K562 (cell line): ENCODE measurements at regions of chr6 and their contacts with region 1.

Region 1: DNA sequence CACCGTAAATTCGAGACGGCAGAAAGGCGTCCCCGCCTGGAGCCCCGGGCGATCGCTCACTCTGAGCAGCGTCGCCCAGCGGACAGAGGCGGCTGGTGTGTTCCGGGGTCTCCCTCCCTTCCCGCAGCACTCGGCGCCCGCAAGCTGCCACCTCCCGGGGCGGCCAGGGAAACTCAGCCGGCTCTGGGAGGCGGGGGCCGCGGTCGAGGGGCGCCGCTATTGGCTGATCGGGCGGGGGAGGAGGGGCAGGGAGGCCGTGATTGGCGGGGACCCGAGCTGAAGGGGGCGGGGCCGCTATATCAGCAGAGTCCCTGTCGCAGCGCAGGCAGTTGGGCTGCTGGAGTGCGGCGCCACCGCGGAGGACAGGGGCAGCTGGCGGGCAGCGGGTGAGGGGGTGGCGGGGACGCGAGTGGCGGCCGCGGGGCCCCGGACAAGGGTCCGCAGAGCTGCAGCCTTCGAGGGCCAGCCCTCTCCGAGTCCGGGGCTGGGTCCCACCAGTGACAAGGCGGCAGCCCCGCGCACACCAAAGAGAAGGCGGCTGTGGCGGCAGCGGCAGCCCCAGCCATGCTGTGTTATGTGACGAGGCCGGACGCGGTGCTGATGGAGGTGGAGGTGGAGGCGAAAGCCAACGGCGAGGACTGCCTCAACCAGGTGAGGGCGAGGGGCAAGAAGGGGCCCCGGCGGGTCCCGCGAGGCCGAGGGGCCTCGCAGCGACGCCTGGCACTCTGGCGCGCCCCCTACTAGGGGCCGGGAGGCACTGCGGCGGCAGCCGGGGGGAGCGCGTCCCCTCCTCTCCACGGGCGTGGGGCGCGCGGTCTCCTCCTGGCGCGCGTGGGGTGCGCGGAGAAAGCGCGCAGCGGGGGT is at the start of gene MYLIP:
- DNase-seq: peak; percentile 99 to 100 (median 100)
- ATAC-seq: peak; percentile 92
- H3K4me3 ChIP-seq: peak within 1 kb of the TSS; percentile 90
- H3K27ac ChIP-seq: peak within 1 kb of the TSS; percentile 92
- H3K4me1 ChIP-seq: peaks cover 20 to 21% of the 10 kb centered on the region in 2 experiments
- H3K27me3 ChIP-seq: no peaks in the 10 kb centered on the region
- CTCF ChIP-seq: peak; percentile 94 to 99 (median 99)
- EP300 ChIP-seq: peak; percentile 50
- POLR2A ChIP-seq: peak; percentile 99
- RAD21 ChIP-seq: peak; percentile 99 to 100
- polyA plus RNA-seq, gene MYLIP: 10.8 to 12.9 TPM

Region 2: DNA sequence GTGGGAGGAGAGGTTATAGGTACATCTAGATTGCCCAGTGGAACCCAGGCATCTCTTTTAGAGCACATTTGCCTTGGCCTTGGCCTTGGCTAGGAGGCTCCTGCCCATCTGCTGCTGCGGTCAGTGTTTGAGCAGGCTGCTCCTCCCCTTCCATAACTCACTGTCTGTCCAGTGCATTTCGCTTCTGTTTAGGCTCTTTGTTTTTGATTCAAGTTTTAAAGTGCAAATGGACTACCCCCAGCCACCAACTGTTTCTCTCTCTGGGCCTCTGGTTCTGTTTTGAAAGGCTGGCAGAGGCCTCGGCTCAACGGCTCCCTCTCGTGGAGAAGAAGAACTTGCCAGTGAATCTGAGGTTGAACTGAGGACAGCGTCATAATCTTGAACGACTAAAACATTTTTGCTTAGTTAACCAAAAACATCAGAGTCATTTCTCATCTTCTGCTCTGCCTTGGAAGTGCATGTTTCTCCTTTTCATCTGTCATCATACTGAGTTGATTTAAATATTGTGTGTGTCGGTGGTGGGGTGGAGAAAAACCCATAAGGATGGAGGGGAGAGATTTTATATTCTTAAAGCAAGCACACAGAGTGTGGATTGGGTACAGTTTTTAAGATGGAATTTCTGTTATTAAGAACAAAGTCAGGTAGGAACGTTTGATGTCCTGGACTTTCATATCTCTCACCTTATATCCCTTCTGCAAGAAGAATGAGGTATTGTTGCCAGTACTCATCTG is 637.6 kb before region 1 on chr6:
- CTCF ChIA-PET with region 1: no interaction called
- POLR2A ChIA-PET with region 1: no interaction called
- in situ Hi-C with region 1: no loop called
- intact Hi-C with region 1: no loop called
- DNase-seq: peak; percentile 66 to 78 (median 71)
- ATAC-seq: peak; percentile 93
- H3K4me3 ChIP-seq: no peak overlapping the region
- H3K27ac ChIP-seq: no peak overlapping the region
- H3K4me1 ChIP-seq: peaks cover 2 to 5% of the 10 kb centered on the region in 2 experiments; a peak in 3 of 5 replicates
- H3K27me3 ChIP-seq: no peaks in the 10 kb centered on the region
- CTCF ChIP-seq: peak; percentile 85 to 91 (median 88)
- EP300 ChIP-seq: 0 out of 2 replicates have a peak, but pooled peaks have one; percentile 11
- POLR2A ChIP-seq: no peak
- RAD21 ChIP-seq: peak; percentile 81 to 91

Region 3: GRCh38 chr6:15577550-15578171 is 551.3 kb before region 1 on chr6:
- CTCF ChIA-PET with region 1: no interaction called
- POLR2A ChIA-PET with region 1: no interaction called
- in situ Hi-C with region 1: no loop called
- intact Hi-C with region 1: no loop called
- DNase-seq: no peak
- ATAC-seq: no peak
- H3K4me3 ChIP-seq: no peak overlapping the region
- H3K27ac ChIP-seq: no peak overlapping the region
- H3K4me1 ChIP-seq: peaks cover 3 to 27% of the 10 kb centered on the region in 2 experiments; a peak in 4 of 5 replicates
- H3K27me3 ChIP-seq: no peaks in the 10 kb centered on the region
- CTCF ChIP-seq: no peak
- EP300 ChIP-seq: no peak
- POLR2A ChIP-seq: no peak
- RAD21 ChIP-seq: no peak

Region 4: DNA sequence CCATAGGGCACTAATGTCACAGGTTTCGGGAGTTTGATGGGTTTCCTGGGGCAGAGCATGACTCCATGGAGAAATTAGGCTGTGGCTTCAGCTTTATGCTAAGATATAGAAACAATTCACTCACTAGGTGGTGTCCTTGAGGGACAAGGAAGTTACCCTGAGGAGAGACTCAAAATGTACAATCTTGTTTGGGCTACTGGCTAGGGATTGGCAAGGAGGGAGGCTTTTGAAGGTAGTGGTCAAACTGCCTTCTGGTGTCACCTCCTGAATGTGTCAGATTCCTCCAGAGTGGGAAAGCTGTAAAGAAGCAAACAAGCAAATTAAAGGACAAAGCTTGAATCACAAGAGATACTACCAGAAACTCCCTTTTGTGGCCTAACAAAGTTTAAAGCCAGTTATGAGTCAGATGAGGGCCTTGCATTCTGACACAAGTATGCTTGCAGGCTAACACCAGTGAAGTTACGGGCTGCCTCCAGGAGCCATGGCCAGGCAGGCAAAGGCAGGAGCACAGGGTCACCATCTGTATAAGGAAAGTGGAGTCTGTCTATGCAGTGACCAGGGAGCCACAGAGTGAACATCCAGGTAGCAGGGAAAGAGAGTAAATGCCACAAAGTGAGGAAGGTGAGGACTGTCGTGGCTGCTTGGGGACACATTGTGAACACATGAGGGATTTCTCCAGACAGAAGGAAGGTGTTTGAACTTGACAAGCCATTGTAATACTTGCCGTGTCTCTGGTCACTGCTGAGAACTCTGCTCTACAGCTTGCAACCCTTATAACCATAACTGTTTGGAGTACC is 358.4 kb before region 1 on chr6:
- CTCF ChIA-PET with region 1: no interaction called
- POLR2A ChIA-PET with region 1: interaction called, 16 read pairs
- in situ Hi-C with region 1: no loop called
- intact Hi-C with region 1: no loop called
- DNase-seq: peak in 2 of 4 experiments; percentile 28 to 45
- ATAC-seq: peak; percentile 80
- H3K4me3 ChIP-seq: no peak overlapping the region
- H3K27ac ChIP-seq: 0 out of 3 replicates have a peak overlapping the region, but pooled peaks have one; percentile 3
- H3K4me1 ChIP-seq: peaks cover 0 to 26% of the 10 kb centered on the region in 2 experiments; a peak in 4 of 5 replicates
- H3K27me3 ChIP-seq: no peaks in the 10 kb centered on the region
- CTCF ChIP-seq: peak; percentile 24 to 38 (median 31); a peak in 4 of 6 replicates
- EP300 ChIP-seq: no peak
- POLR2A ChIP-seq: no peak
- RAD21 ChIP-seq: peak; percentile 55 to 64

Region 5: GRCh38 chr6:15901141-15902115 is 227.6 kb before region 1 on chr6:
- CTCF ChIA-PET with region 1: no interaction called
- POLR2A ChIA-PET with region 1: interaction called, 186 read pairs
- in situ Hi-C with region 1: no loop called
- intact Hi-C with region 1: loop called (anchors 1 kb)
- DNase-seq: peak in 3 of 4 experiments; percentile 33 to 72 (median 54)
- ATAC-seq: peak; percentile 52
- H3K4me3 ChIP-seq: no peak overlapping the region
- H3K27ac ChIP-seq: peak overlapping the region; percentile 83
- H3K4me1 ChIP-seq: peaks cover 42 to 74% of the 10 kb centered on the region in 2 experiments
- H3K27me3 ChIP-seq: no peaks in the 10 kb centered on the region
- CTCF ChIP-seq: 0 out of 6 replicates have a peak, but pooled peaks of 2 of the 3 experiments have one; percentile 12 to 20
- EP300 ChIP-seq: peak; percentile 49
- POLR2A ChIP-seq: 0 out of 2 replicates have a peak, but pooled peaks have one; percentile 31
- RAD21 ChIP-seq: peak in 1 of 2 experiments; percentile 8; a peak in 1 of 4 replicates

Region 6: DNA sequence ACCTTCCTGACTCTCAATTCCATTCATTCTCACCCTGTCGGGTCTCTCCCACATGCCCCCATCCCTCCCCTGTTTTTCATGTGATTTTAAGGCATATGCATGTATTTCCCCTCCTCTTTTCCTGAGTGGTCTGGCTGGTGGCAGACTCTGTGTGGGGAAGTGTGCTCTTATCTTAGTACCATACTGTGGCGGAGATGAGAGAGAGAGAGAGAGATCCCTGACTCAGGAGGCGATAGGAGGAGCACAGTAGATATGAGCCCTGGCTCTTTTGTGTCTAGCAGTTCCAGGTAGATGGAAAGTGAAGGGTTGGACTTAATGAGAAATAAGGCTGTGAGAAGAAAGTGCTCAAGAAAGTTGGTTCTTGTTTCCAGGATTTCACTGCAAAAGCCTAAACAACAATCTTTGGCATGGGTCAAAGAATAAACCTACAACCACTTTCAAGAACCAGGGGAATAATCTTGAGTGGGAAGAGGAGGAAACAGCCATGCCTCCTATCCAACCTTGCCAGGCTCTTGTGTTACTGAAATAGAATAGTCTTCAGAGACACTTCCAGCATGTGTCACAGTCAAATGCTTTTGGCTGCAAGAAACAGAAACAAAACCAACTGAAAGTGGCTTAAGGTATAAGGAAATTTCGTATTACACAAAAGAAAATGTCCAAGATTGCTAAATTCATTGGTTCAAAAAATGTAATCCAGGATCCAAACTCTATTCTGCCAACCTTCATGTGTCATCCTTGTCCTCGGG is 123.9 kb before region 1 on chr6:
- CTCF ChIA-PET with region 1: no interaction called
- POLR2A ChIA-PET with region 1: interaction called, 7 read pairs
- in situ Hi-C with region 1: no loop called
- intact Hi-C with region 1: loop called (anchors 2 kb)
- DNase-seq: peak; percentile 73 to 88 (median 76)
- ATAC-seq: peak; percentile 83
- H3K4me3 ChIP-seq: no peak overlapping the region
- H3K27ac ChIP-seq: peak overlapping the region; percentile 78
- H3K4me1 ChIP-seq: peaks cover 49 to 80% of the 10 kb centered on the region in 2 experiments
- H3K27me3 ChIP-seq: no peaks in the 10 kb centered on the region
- CTCF ChIP-seq: no peak
- EP300 ChIP-seq: peak; percentile 82
- POLR2A ChIP-seq: no peak
- RAD21 ChIP-seq: peak in 1 of 2 experiments; percentile 15

Region 7: GRCh38 chr6:16092990-16093389 is 36.0 kb before region 1 on chr6:
- CTCF ChIA-PET with region 1: no interaction called
- POLR2A ChIA-PET with region 1: no interaction called
- in situ Hi-C with region 1: no loop called
- intact Hi-C with region 1: no loop called
- DNase-seq: no peak
- ATAC-seq: no peak
- H3K4me3 ChIP-seq: no peak overlapping the region
- H3K27ac ChIP-seq: no peak overlapping the region
- H3K4me1 ChIP-seq: peaks cover 0 to 20% of the 10 kb centered on the region in 2 experiments; a peak in 4 of 5 replicates
- H3K27me3 ChIP-seq: no peaks in the 10 kb centered on the region
- CTCF ChIP-seq: no peak
- EP300 ChIP-seq: no peak
- POLR2A ChIP-seq: no peak
- RAD21 ChIP-seq: no peak

Region 8: GRCh38 chr6:16154904-16155303 is 25.9 kb after region 1 on chr6:
- CTCF ChIA-PET with region 1: no interaction called
- POLR2A ChIA-PET with region 1: interaction called, 168 read pairs
- in situ Hi-C with region 1: no loop called
- intact Hi-C with region 1: no loop called
- DNase-seq: no peak
- ATAC-seq: no peak
- H3K4me3 ChIP-seq: no peak overlapping the region
- H3K27ac ChIP-seq: no peak overlapping the region
- H3K4me1 ChIP-seq: peaks cover 7 to 16% of the 10 kb centered on the region in 2 experiments
- H3K27me3 ChIP-seq: no peaks in the 10 kb centered on the region
- CTCF ChIP-seq: no peak
- EP300 ChIP-seq: no peak
- POLR2A ChIP-seq: no peak
- RAD21 ChIP-seq: no peak

Region 9: DNA sequence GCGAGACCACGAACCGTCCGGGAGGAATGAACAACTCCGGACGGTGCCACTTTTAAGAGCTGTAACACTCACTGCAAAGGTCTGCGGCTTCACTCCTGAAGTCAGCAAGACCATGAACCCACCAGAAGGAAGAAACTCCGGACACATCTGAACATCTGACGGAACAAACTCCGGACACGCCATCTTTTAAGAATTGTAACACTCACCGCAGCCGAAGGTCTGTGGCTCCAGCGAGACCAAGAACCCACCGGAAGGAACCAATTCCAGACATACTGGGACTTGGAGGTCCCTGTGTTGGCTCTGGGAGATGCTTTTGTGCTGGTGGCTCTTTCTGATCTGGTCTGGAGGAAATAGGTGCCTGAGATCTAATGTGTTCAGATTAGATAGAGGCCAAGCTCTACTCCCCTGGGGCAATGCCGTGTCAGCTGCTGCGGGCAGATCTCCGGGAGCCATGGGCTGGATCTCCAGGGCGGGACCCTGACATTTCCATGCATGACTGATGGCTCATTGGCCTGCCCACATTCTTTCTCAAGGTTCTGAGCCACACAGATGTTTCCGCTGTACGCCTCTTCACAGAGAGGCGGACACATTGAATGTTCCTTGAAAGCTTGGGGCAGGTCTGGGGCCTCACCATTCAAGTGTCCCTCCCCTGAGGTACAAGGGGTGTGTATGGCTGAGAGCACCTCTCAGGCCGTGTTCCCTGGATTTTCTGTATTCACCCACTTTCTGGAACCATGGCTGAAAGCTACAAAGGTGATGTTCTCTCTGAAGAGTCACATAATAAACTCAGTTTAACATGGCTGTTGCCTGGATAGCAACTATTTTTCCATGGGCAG is 138.7 kb after region 1 on chr6:
- CTCF ChIA-PET with region 1: no interaction called
- POLR2A ChIA-PET with region 1: interaction called, 25 read pairs
- in situ Hi-C with region 1: no loop called
- intact Hi-C with region 1: loop called (anchors 5 kb)
- DNase-seq: peak; percentile 91 to 98 (median 92)
- ATAC-seq: peak; percentile 81
- H3K4me3 ChIP-seq: peak overlapping the region; percentile 42
- H3K27ac ChIP-seq: peak overlapping the region; percentile 83
- H3K4me1 ChIP-seq: peaks cover 28 to 44% of the 10 kb centered on the region in 2 experiments
- H3K27me3 ChIP-seq: no peaks in the 10 kb centered on the region
- CTCF ChIP-seq: no peak
- EP300 ChIP-seq: peak; percentile 96
- POLR2A ChIP-seq: peak; percentile 89
- RAD21 ChIP-seq: no peak; a peak in 1 of 4 replicates